IMR-90 (cell line): ENCODE measurements at regions of chr17 and their contacts with region 1.

Region 1: GRCh38 chr17:996554-997344 is at the start of gene TIMM22:
- DNase-seq: peak; percentile 97
- ATAC-seq: peak; percentile 92
- H3K4me3 ChIP-seq: peak within 1 kb of the TSS; percentile 54
- H3K27ac ChIP-seq: peak within 1 kb of the TSS; percentile 95
- H3K4me1 ChIP-seq: peaks cover 20% of the 10 kb centered on the region
- H3K27me3 ChIP-seq: no peaks in the 10 kb centered on the region
- CTCF ChIP-seq: peak; percentile 95
- POLR2A ChIP-seq: peak; percentile 72
- RAD21 ChIP-seq: peak; percentile 88
- total RNA-seq, gene TIMM22: 12.7 and 14.4 TPM in 2 replicates

Region 2: DNA sequence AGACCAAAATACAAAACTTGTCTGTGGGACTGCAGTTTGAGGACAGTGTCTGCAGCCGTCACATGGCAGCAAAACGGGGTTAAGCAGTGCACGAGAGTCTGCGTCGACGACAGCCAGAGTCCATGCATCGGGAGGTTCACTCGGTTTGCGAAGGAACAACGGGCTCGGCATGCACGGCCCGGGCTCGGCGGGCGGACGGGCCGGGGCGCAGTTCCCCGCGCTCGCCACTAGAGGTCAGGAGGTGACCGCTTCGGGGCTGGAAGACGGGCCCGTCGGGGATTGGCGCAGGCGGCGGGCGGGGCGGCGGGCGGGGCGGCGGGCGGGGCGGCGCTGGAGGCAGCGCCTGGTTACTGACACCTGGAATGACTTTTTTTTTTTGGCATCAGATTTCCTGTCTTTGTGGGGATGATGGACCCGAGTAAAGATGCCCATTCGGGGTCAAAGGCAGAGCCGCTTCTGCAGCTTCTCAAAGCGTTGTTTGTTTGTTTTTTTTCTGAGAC is 852.9 kb before region 1 on chr17:
- CTCF ChIA-PET with region 1: no interaction called
- POLR2A ChIA-PET with region 1: no interaction called
- dilution Hi-C with region 1: no loop called
- in situ Hi-C with region 1: no loop called
- intact Hi-C with region 1: loop called (anchors 5 kb)
- DNase-seq: peak; percentile 39
- ATAC-seq: peak; percentile 100
- H3K4me3 ChIP-seq: no peak overlapping the region
- H3K27ac ChIP-seq: no peak overlapping the region
- H3K4me1 ChIP-seq: no peaks in the 10 kb centered on the region
- H3K27me3 ChIP-seq: peaks cover 5% of the 10 kb centered on the region
- CTCF ChIP-seq: peak; percentile 81
- POLR2A ChIP-seq: no peak
- RAD21 ChIP-seq: peak; percentile 84

Region 3: DNA sequence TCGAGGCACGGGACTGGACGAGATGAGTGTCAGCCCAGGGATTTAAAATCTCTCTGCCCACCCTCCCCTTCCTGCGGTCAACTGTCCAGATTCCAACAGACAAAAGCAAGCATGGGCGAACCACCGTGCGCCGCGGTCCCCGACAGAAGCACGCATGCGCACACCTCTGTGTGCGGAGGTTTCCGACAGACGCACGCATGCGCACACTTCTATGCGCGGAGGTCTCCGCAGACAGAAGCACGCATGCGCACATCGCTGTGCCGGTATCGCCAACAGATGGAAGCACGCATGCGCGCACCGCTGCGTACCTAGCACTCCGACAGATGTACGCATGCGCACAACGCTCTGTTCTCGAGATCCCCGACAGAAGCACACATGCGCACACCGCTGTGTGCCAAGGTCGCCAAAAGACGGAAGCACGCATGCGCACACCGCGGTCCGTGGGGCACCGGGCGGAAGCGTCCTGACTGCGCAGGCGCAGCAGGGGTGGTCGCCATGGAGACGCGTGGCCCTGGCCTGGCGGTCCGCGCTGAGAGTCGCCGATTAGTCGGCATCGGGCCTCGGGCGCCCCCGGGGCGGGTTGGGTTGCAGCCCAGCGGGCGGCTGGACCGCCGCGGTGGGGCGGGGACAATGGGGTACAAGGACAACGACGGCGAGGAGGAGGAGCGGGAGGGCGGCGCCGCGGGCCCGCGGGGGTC is 586.8 kb before region 1 on chr17:
- CTCF ChIA-PET with region 1: interaction called, 5 read pairs
- POLR2A ChIA-PET with region 1: no interaction called
- dilution Hi-C with region 1: no loop called
- in situ Hi-C with region 1: no loop called
- intact Hi-C with region 1: loop called (anchors 5 kb)
- DNase-seq: peak; percentile 98
- ATAC-seq: peak; percentile 91
- H3K4me3 ChIP-seq: peak overlapping the region; percentile 44
- H3K27ac ChIP-seq: peak overlapping the region; percentile 48
- H3K4me1 ChIP-seq: peaks cover 4% of the 10 kb centered on the region
- H3K27me3 ChIP-seq: no peaks in the 10 kb centered on the region
- CTCF ChIP-seq: peak; percentile 9; the same call in 1 of the 2 replicates
- POLR2A ChIP-seq: peak; percentile 60
- RAD21 ChIP-seq: no peak

Region 4: GRCh38 chr17:781805-782731 is 214.7 kb before region 1 on chr17 and contains the starts of genes GLOD4 and MRM3:
- CTCF ChIA-PET with region 1: no interaction called
- POLR2A ChIA-PET with region 1: no interaction called
- dilution Hi-C with region 1: loop called (anchors 25 kb)
- in situ Hi-C with region 1: no loop called
- intact Hi-C with region 1: no loop called
- DNase-seq: peak; percentile 85
- ATAC-seq: peak; percentile 94
- H3K4me3 ChIP-seq: peak within 1 kb of the TSS; percentile 88
- H3K27ac ChIP-seq: peak within 1 kb of the TSS; percentile 81
- H3K4me1 ChIP-seq: peaks cover 10% of the 10 kb centered on the region; the same call in 1 of the 2 replicates
- H3K27me3 ChIP-seq: no peaks in the 10 kb centered on the region
- CTCF ChIP-seq: no peak; the same call in 1 of the 2 replicates
- POLR2A ChIP-seq: peak; percentile 58
- RAD21 ChIP-seq: peak; percentile 1; the same call in 1 of the 2 replicates
- total RNA-seq, gene GLOD4: 26.3 and 41.1 TPM in 2 replicates
- total RNA-seq, gene MRM3: 15.2 and 16.1 TPM in 2 replicates

Region 5: GRCh38 chr17:1074886-1075605 is 78.3 kb after region 1 on chr17:
- CTCF ChIA-PET with region 1: no interaction called
- POLR2A ChIA-PET with region 1: no interaction called
- dilution Hi-C with region 1: no loop called
- in situ Hi-C with region 1: no loop called
- intact Hi-C with region 1: no loop called
- DNase-seq: no peak
- ATAC-seq: no peak
- H3K4me3 ChIP-seq: no peak overlapping the region
- H3K27ac ChIP-seq: no peak overlapping the region
- H3K4me1 ChIP-seq: peaks cover 6% of the 10 kb centered on the region
- H3K27me3 ChIP-seq: no peaks in the 10 kb centered on the region
- CTCF ChIP-seq: no peak
- POLR2A ChIP-seq: no peak
- RAD21 ChIP-seq: no peak

Region 6: DNA sequence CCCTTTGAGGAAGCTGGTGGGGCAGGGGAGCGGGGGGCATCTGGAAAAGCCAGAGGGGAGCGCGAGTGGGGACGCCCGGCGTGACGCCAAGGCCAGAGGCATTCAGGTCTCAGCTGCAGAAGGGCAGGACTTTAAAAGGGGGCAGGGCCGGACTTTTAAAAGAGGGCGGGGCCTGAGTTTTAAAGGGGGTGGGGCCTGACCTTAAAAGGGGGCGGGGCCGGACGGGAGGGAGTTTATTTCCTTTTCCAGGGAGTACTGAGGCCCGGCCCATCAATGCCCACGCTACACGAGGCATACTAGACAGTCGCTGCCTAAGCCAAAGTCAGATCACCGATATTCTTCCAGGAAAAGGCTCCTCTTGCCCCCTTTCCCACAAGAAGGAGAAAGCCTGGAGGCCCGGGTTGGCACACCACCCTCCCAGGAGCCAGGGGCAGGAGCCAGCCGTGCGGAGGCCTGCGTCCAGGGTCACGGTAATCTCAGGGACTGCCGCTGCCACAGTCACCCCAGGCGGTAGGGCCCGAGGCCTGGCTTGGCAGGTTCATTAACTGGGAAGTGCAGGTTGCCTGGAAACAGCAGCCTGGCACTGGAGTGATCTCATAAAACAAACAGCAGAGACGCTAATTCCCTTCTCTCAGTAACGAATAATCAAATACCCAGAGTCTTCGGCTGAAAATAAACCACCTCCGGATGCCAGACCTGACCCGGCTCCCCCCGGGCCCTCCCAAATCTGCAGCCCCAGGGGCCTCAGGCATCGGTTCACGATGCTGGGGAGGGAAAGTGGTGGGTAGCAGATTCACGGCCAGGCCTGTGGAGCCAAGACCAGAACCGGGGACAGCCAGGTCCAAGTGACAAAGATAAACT is 90.9 kb after region 1 on chr17:
- CTCF ChIA-PET with region 1: no interaction called
- POLR2A ChIA-PET with region 1: no interaction called
- dilution Hi-C with region 1: no loop called
- in situ Hi-C with region 1: no loop called
- intact Hi-C with region 1: no loop called
- DNase-seq: no peak
- ATAC-seq: peak; percentile 25; the same call in 1 of the 2 replicates
- H3K4me3 ChIP-seq: no peak overlapping the region
- H3K27ac ChIP-seq: no peak overlapping the region
- H3K4me1 ChIP-seq: no peaks in the 10 kb centered on the region
- H3K27me3 ChIP-seq: no peaks in the 10 kb centered on the region
- CTCF ChIP-seq: no peak
- POLR2A ChIP-seq: no peak
- RAD21 ChIP-seq: no peak